ENCODE measurements at regions of chr17 and their contacts with region 1.

Region 1: GRCh38 chr17:81833160-81833920 is at the start of gene MCRIP1:
- DNase-seq: peak; percentile 95
- H3K4me3 Mint-ChIP-seq: peak within 1 kb of the TSS; percentile 93
- H3K27ac Mint-ChIP-seq: peak within 1 kb of the TSS; percentile 92
- H3K4me1 Mint-ChIP-seq: peaks cover 16% of the 10 kb centered on the region
- H3K27me3 Mint-ChIP-seq: no peaks in the 10 kb centered on the region
- total RNA-seq, gene MCRIP1: 56.0 and 62.3 TPM in 2 replicates

Region 2: DNA sequence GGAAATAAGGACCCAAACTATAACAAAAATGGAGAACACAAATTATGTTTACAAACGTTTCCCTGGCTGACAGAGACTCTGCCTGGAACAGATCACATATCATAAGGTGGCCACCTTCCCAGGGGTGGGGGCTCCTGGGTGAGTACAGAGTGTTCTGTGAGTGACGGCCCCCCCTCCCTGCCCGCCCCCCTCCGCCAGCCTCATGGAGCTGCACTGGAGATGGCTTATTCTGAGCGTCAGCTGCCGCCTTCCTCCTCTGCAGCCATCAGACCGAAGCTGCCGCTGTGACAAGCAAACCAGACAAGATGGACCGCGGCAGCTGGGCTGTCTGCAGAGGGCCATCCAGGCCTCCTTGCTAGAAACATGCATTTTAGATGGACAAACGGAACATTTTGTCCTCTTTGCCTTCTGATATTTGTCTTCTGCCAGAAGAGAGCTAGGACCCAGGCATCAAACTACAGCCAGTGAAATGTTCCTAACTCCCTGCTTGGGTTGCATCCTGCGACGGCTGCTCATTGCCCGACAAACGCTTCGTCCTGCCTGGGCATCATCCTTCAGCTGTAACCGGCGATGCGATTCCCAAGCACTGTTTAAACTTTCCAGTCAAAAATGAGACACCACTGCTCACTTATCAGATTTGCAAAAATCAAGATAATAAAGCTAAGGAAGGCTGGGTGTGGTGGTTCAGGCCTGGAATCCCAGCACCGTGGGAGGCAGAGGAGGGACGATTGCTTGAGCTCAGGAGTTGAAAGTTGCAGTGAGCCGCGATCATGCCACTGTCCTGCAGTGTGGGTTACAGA is 1304.0 kb before region 1 on chr17:
- intact Hi-C with region 1: no loop called
- DNase-seq: no peak
- H3K4me3 Mint-ChIP-seq: no peak overlapping the region
- H3K27ac Mint-ChIP-seq: no peak overlapping the region
- H3K4me1 Mint-ChIP-seq: no peaks in the 10 kb centered on the region
- H3K27me3 Mint-ChIP-seq: peaks cover 8% of the 10 kb centered on the region

Region 3: DNA sequence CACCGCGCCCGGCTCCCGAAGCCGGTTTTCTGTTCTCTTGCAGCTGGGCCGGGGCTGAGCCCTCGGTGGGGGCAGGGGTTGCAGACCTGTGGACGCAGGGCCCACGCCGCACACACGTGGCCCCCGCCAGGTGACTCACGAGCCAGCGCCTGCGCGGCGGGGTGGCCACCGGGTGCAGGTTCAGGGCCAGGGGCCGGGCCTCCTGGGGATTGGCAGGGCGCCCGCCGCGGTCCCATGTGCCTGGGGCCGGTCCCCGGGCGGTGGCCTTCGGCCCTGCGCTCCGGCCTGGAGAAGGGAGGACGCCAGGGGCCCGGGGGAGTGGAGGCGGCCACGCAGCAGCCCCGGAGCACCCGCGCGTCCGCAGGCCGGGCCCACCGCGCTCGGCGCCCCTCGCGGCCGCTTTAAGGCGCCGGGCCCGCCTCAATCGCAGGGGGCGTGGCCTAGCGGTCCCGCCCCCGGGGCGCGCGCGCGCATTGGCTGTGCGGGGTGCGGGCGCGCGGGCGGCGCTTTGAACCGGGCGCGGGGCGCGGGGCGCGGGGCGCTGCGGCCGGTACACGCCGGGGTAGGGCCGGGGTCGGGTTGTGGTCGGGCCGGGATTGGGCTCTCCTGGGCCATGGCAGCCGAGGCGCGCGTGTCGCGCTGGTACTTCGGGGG is 121.4 kb before region 1 on chr17 and contains the start of gene SLC25A10:
- intact Hi-C with region 1: loop called (anchors 1 kb)
- DNase-seq: peak; percentile 81
- H3K4me3 Mint-ChIP-seq: peak within 1 kb of the TSS; percentile 90
- H3K27ac Mint-ChIP-seq: peak within 1 kb of the TSS; percentile 79
- H3K4me1 Mint-ChIP-seq: peaks cover 13% of the 10 kb centered on the region
- H3K27me3 Mint-ChIP-seq: no peaks in the 10 kb centered on the region
- total RNA-seq, gene SLC25A10: 45.7 and 49.6 TPM in 2 replicates

Region 4: DNA sequence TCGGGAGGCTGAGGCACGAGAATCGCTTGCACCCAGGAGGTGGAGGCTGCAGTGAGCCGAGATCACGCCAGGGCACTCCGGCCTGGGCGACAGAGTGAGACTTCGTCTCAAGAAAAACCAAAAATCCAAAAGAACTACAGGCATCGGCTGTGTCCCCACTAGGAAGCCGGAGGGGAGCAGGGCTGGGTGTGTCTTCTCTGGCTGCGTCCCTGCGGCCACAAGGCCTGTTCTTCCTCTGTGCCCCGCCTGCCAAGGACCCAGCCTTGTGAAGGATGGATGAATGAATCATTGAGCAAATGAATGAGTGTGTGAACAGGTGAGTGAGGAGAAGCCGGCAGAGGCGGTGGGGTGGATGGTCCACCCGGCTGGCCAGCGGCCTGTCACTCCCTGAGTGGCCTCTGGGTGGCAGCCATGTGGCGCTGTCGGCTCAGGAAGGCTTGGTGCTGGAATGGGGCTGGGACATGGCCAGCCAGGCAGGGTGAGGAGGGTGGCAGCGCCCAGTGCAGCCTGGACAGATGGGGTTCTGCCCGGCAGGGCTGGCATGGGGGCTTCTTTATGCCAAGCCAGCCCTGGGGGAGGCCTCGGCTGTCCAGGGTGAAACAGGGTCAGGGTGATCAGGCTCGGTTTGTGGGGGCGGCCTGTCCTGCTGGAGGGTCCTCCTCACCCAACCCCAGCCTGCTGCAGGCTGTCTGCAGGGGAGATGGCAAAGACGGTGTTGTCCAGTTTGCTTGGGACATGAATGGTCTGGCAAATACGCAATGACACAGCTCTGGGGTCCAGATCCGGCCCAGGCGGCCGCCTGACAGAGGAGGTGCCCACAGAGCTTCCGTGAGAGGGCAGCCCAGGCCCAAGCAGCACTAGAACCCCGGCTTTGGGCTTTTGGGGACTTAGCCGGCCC is 99.6 kb before region 1 on chr17:
- intact Hi-C with region 1: loop called (anchors 1 kb)
- DNase-seq: peak; percentile 62
- H3K4me3 Mint-ChIP-seq: no peak overlapping the region
- H3K27ac Mint-ChIP-seq: no peak overlapping the region
- H3K4me1 Mint-ChIP-seq: peaks cover 6% of the 10 kb centered on the region
- H3K27me3 Mint-ChIP-seq: peaks cover 11% of the 10 kb centered on the region

Region 5: GRCh38 chr17:81871387-81872230 is 38.3 kb after region 1 on chr17:
- intact Hi-C with region 1: loop called (anchors 5 kb)
- DNase-seq: peak; percentile 96
- H3K4me3 Mint-ChIP-seq: peak overlapping the region; percentile 84
- H3K27ac Mint-ChIP-seq: peak overlapping the region; percentile 90
- H3K4me1 Mint-ChIP-seq: peaks cover 7% of the 10 kb centered on the region
- H3K27me3 Mint-ChIP-seq: no peaks in the 10 kb centered on the region

Region 6: GRCh38 chr17:81911277-81911961 is 78.1 kb after region 1 on chr17 and contains the start of gene PCYT2:
- intact Hi-C with region 1: loop called (anchors 1 kb)
- DNase-seq: peak; percentile 91
- H3K4me3 Mint-ChIP-seq: peak within 1 kb of the TSS; percentile 88
- H3K27ac Mint-ChIP-seq: peak within 1 kb of the TSS; percentile 61
- H3K4me1 Mint-ChIP-seq: peaks cover 26% of the 10 kb centered on the region
- H3K27me3 Mint-ChIP-seq: no peaks in the 10 kb centered on the region
- total RNA-seq, gene PCYT2: 49.5 and 54.5 TPM in 2 replicates

Region 7: DNA sequence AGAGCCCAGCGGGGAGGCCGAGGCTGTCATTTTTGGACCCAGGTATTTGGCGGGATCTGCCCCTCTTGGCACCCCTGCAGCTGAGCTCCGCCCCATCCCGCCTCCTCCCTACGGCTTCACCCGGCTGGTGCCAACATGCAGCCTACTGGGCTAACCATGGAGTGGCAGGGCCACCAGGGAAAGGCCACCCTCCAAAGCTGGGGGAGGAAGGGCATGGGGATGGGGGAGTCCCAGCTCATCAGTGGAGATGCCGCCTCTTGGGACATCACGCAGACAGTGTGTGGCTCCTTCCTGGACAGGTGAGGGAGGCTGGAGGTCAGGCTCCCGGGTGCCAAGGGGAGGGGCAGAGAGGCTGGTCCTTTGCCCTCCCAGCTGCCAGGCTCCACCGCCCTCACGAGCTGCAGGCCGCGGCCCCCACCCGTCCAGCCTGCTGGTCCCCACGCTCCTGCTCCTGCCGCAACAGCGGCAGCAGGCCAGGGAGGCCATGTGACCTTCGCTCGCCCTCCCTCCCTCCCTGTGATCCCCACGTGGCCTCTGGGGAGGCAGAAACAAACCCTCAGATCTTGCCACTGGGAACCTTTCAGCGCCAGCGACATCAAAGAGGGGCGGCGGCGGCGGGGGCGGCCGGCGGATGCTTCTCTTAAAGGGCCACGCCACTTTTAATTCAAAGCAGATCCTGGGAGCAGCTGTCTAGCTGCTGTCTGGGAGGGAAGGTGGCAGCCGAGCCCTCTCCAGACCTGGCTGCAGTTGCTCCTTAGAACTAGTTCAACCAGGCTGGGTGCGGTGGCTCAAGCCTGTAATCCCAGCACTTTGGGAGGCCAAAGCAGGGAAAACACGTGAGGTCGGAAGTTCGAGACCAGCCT is 134.4 kb after region 1 on chr17:
- intact Hi-C with region 1: no loop called
- DNase-seq: peak; percentile 82
- H3K4me3 Mint-ChIP-seq: peak overlapping the region; percentile 74
- H3K27ac Mint-ChIP-seq: peak overlapping the region; percentile 73
- H3K4me1 Mint-ChIP-seq: peaks cover 5% of the 10 kb centered on the region
- H3K27me3 Mint-ChIP-seq: peaks cover 27% of the 10 kb centered on the region

Region 8: DNA sequence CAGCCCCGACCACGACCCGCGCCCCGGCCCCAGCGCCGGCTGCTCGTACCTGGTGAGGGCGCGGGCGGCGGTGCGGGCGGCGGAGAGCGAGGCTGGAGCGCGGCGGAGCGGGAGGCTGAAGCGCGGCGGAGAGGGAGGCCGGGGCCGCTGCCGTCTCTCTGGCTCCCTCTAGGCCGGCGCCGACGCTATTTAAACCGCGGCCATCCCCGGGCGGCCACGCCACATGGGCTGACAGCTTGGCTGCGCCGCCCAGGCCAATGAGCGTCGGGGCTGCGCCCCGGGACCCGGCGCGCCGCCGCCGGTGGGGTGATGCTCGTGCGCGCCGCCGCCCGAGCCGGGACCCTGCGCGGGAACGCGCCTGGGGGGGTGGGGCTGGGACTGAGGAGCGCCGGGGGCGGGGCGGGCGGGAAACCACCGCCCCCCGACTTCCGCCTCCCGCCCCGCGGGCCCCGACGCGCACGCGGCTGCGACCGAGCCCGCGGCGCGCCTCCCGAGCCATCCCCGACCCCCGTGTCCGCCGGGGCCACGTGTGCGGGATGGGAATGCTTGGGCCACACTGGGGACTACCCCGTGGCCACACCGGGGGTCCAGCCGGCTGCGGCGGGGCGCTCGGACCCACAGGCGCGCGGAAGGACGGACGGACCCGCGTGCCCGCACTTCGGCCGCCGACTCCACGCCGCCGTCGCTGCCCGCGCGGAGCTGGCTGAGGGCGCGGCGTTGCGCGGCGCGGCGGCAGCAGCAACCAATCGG is 264.9 kb after region 1 on chr17 and contains the start of gene FASN:
- intact Hi-C with region 1: loop called (anchors 1 kb)
- DNase-seq: peak; percentile 90
- H3K4me3 Mint-ChIP-seq: peak within 1 kb of the TSS; percentile 82
- H3K27ac Mint-ChIP-seq: peak within 1 kb of the TSS; percentile 72
- H3K4me1 Mint-ChIP-seq: no peaks in the 10 kb centered on the region
- H3K27me3 Mint-ChIP-seq: no peaks in the 10 kb centered on the region
- total RNA-seq, gene FASN: 415 and 421 TPM in 2 replicates